HepG2 (cell line): ENCODE measurements at regions of chr5 and their contacts with region 1.

Region 1: DNA sequence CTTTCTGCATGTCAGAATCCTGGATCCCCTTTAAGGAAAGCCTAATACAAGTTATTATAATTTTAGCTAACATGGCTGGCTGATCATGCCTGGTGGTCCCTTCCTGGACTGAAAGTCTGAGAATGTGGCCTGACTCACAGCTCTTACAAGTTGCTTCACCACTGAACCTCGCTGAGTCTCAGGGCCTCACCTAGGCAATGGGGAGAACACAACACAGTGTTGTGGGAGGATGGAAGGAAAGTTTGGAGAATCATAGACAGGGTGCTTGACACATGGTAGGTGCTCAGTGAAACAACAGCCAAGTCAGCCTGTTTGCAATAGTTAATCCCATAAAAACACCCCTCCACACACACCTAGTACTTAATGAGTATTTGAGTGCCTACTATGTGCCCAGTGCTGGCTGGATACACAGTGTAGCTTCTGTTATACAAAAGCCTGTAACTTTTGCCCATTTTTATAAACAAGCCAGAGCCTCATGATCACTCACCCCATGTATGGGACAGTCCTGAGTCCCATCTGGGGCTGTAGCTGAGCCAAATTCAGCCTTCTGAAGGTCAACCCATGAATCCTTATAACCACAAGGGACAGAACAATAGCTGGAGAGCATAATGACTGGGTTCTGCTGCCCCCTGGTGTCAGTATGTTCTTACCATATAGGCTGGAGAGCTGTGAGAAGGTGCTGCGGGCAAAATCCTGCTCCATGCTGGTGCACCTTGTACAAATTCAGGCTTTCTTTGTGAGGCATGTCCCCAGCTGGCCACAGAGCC is 3.9 kb downstream of the ACSL6 start:
- DNase-seq: peak; percentile 76
- ATAC-seq: peak; percentile 54
- H3K4me3 ChIP-seq: no peak overlapping the region
- H3K27ac ChIP-seq: no peak overlapping the region
- H3K4me1 ChIP-seq: peaks cover 56% of the 10 kb centered on the region
- H3K27me3 ChIP-seq: peaks cover 11 to 31% of the 10 kb centered on the region in 2 experiments; a peak in 3 of 5 replicates
- CTCF ChIP-seq: peak; percentile 91
- EP300 ChIP-seq: no peak
- POLR2A ChIP-seq: no peak
- RAD21 ChIP-seq: peak; percentile 93

Region 2: GRCh38 chr5:131436081-131436480 is 571.5 kb before region 1 on chr5:
- CTCF ChIA-PET with region 1: no interaction called
- POLR2A ChIA-PET with region 1: no interaction called
- in situ Hi-C with region 1: loop called (anchors 25 kb)
- intact Hi-C with region 1: no loop called
- DNase-seq: no peak
- ATAC-seq: no peak
- H3K4me3 ChIP-seq: no peak overlapping the region
- H3K27ac ChIP-seq: no peak overlapping the region
- H3K4me1 ChIP-seq: no peaks in the 10 kb centered on the region
- H3K27me3 ChIP-seq: no peaks in the 10 kb centered on the region
- CTCF ChIP-seq: no peak
- EP300 ChIP-seq: no peak
- POLR2A ChIP-seq: no peak
- RAD21 ChIP-seq: no peak

Region 3: GRCh38 chr5:131610198-131611063 is 397.2 kb before region 1 on chr5:
- CTCF ChIA-PET with region 1: no interaction called
- POLR2A ChIA-PET with region 1: interaction called, 4 read pairs
- in situ Hi-C with region 1: loop called (anchors 10 kb)
- intact Hi-C with region 1: no loop called
- DNase-seq: peak; percentile 86
- ATAC-seq: peak; percentile 81
- H3K4me3 ChIP-seq: peak overlapping the region in 2 of 3 experiments; percentile 17 to 30; a peak in 3 of 6 replicates
- H3K27ac ChIP-seq: peak overlapping the region; percentile 94
- H3K4me1 ChIP-seq: peaks cover 73% of the 10 kb centered on the region
- H3K27me3 ChIP-seq: no peaks in the 10 kb centered on the region
- CTCF ChIP-seq: no peak
- EP300 ChIP-seq: peak in 1 of 2 experiments; percentile 85; a peak in 2 of 4 replicates
- POLR2A ChIP-seq: no peak
- RAD21 ChIP-seq: no peak

Region 4: DNA sequence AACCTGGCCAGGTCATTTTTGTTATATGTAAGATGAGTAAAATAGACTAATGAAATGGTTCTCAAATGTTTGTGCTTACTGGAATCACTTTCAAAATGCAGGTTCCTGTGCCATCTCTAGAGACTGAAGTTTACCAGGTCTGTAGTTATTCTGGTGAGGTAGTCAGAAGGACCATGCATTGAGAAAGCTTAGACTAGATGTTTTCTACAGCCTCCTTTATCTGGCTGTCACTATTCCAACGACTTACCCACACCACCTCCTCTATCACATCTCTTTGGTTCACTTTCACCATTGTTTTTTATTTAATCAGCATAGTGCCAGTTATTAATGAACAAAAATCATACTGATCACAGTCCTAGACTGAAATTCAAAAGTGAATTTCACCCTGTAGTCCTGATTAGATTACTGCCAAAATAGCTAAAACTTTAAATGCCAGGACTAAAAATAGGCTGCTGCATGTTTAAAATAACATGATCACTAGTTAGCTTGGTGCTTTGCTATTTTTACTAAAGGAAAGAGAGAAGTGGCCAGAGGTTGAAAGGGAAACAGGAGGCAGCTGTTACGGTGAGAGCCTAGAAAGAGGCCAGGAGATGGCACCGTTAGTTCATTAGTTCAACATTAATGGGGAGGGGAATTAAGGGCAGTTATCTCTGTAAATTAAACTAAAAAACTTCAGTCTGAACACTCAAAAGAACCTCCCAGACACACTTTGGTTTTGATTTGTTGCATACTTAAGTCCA is 196.9 kb before region 1 on chr5:
- CTCF ChIA-PET with region 1: interaction called, 18 read pairs
- POLR2A ChIA-PET with region 1: no interaction called
- in situ Hi-C with region 1: loop called (anchors 5 kb)
- intact Hi-C with region 1: loop called (anchors 1 kb)
- DNase-seq: peak; percentile 16
- ATAC-seq: peak; percentile 66
- H3K4me3 ChIP-seq: no peak overlapping the region
- H3K27ac ChIP-seq: no peak overlapping the region
- H3K4me1 ChIP-seq: no peaks in the 10 kb centered on the region
- H3K27me3 ChIP-seq: no peaks in the 10 kb centered on the region; a peak in 1 of 5 replicates
- CTCF ChIP-seq: peak; percentile 72
- EP300 ChIP-seq: no peak
- POLR2A ChIP-seq: no peak
- RAD21 ChIP-seq: peak; percentile 67

Region 5: GRCh38 chr5:131899692-131900091 is 107.9 kb before region 1 on chr5:
- CTCF ChIA-PET with region 1: no interaction called
- POLR2A ChIA-PET with region 1: no interaction called
- in situ Hi-C with region 1: no loop called
- intact Hi-C with region 1: loop called (anchors 5 kb)
- DNase-seq: no peak
- ATAC-seq: no peak
- H3K4me3 ChIP-seq: no peak overlapping the region
- H3K27ac ChIP-seq: no peak overlapping the region
- H3K4me1 ChIP-seq: no peaks in the 10 kb centered on the region
- H3K27me3 ChIP-seq: no peaks in the 10 kb centered on the region
- CTCF ChIP-seq: no peak
- EP300 ChIP-seq: no peak
- POLR2A ChIP-seq: no peak
- RAD21 ChIP-seq: no peak

Region 6: DNA sequence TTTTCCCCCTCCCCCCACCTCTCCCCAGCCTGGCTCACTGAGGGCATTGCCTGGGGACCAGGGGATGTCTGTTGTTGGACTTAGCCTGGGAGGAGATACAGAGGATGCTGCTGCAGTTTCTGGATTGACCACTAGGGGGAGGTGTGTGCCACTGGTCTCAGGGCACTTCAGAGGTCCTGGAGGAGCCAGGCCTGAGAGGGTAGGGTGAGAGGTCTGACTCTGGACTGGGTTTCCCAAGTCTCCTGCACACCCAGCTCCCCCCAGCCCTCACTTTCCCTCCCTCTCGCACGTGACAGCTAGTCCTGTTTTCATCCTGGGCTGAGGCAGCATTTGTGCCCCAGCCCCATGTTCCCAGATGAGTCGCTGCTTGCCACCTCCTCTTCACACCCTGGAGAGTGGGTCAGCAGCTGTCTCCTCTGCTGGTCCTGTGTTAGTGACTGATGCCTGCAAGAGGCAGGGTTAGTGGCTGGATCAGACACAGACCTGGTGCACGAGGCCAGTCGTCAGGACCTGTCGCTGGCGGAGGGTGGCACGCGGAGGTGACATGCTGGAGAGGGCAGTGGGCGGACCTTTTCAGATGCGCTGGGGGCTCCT is 57.3 kb after region 1 on chr5:
- CTCF ChIA-PET with region 1: no interaction called
- POLR2A ChIA-PET with region 1: no interaction called
- in situ Hi-C with region 1: no loop called
- intact Hi-C with region 1: loop called (anchors 2 kb)
- DNase-seq: peak; percentile 52
- ATAC-seq: peak; percentile 85
- H3K4me3 ChIP-seq: no peak overlapping the region
- H3K27ac ChIP-seq: no peak overlapping the region
- H3K4me1 ChIP-seq: peaks cover 9% of the 10 kb centered on the region
- H3K27me3 ChIP-seq: peaks cover 4 to 26% of the 10 kb centered on the region in 2 experiments; a peak in 3 of 5 replicates
- CTCF ChIP-seq: peak; percentile 84
- EP300 ChIP-seq: no peak
- POLR2A ChIP-seq: no peak
- RAD21 ChIP-seq: peak; percentile 28; the same call in 1 of the 2 replicates